ENCODE measurements at regions of chr5 and their contacts with region 1.

Region 1: DNA sequence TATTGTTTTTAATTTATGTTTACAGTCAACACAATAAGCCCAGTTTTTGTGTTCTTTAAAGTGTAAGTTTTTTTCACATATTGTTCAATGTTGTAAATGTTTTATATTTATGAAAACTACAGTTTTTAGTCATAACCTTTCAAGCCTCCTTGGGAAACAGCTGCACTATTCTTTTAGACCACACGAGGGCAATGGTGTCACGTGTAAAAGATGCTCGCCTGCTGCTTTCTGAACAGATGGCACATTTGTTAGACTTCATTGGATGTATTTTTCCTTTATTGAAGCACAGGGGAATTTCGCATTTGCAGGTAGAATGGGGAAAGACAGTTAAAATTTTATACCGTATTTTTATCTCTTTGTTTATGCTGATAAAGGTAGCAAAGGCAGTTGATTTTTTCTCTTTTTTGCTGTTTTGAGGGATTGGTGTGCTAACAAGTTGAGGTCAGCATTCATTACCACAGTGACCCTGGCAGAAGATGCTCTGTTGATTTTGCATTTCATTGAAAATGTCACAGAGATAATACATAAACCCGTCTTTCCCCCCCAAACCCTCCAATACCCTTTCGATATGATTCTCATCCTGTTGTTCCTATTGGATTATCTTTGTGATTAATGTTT is 59.0 kb downstream of the MAT2B start:
- DNase-seq: peak; percentile 79
- H3K4me3 Mint-ChIP-seq: no peak overlapping the region
- H3K27ac Mint-ChIP-seq: no peak overlapping the region
- H3K4me1 Mint-ChIP-seq: peaks cover 23% of the 10 kb centered on the region
- H3K27me3 Mint-ChIP-seq: peaks cover 51% of the 10 kb centered on the region

Region 2: GRCh38 chr5:163437309-163438182 is 126.9 kb before region 1 on chr5 and contains the start of gene CCNG1:
- CTCF ChIA-PET with region 1: no interaction called
- intact Hi-C with region 1: loop called (anchors 1 kb)
- DNase-seq: peak; percentile 95
- H3K4me3 Mint-ChIP-seq: peak within 1 kb of the TSS; percentile 91
- H3K27ac Mint-ChIP-seq: peak within 1 kb of the TSS; percentile 90
- H3K4me1 Mint-ChIP-seq: peaks cover 44% of the 10 kb centered on the region
- H3K27me3 Mint-ChIP-seq: no peaks in the 10 kb centered on the region
- total RNA-seq, gene CCNG1: 213 to 227 TPM

Region 3: GRCh38 chr5:163453705-163454104 is 110.7 kb before region 1 on chr5:
- CTCF ChIA-PET with region 1: no interaction called
- intact Hi-C with region 1: no loop called
- DNase-seq: no peak
- H3K4me3 Mint-ChIP-seq: no peak overlapping the region
- H3K27ac Mint-ChIP-seq: no peak overlapping the region
- H3K4me1 Mint-ChIP-seq: peaks cover 23% of the 10 kb centered on the region
- H3K27me3 Mint-ChIP-seq: no peaks in the 10 kb centered on the region

Region 4: GRCh38 chr5:163505368-163506094 is 58.9 kb before region 1 on chr5 and contains the start of gene MAT2B:
- CTCF ChIA-PET with region 1: no interaction called
- intact Hi-C with region 1: loop called (anchors 1 kb)
- DNase-seq: peak; percentile 95
- H3K4me3 Mint-ChIP-seq: peak within 1 kb of the TSS; percentile 85
- H3K27ac Mint-ChIP-seq: peak within 1 kb of the TSS; percentile 98
- H3K4me1 Mint-ChIP-seq: peaks cover 32% of the 10 kb centered on the region
- H3K27me3 Mint-ChIP-seq: no peaks in the 10 kb centered on the region
- total RNA-seq, gene MAT2B: 87.6 to 88.7 TPM

Region 5: DNA sequence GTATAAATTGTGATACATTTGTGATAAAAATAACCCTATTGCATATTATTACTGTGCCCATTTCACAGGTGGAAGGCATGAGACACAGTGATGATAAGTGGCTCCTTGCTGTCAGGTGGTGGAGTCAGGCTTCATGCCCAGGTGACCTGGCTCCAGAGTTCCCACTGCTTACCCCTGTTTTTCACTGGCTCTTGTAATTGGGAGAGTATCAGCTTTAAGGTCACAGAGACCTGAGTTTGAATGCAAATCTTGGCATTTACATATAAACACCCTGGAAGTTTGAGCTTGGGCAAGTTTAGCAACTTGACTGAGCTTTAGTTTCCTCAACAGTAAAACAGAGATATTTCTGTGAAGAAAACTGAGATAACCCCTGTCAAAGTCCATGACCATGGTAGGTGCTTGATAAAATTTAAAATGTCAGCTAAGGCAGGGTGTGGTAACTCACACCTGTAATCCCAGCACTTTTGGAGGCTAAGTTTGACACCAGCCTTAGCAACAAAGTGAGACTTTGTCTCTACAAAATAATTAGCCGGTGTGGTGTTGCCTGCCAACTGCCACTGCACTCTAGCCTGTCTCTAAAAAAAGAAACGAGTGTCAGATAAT is 29.8 kb before region 1 on chr5:
- CTCF ChIA-PET with region 1: no interaction called
- intact Hi-C with region 1: no loop called
- DNase-seq: no peak
- H3K4me3 Mint-ChIP-seq: no peak overlapping the region
- H3K27ac Mint-ChIP-seq: no peak overlapping the region
- H3K4me1 Mint-ChIP-seq: peaks cover 7% of the 10 kb centered on the region
- H3K27me3 Mint-ChIP-seq: no peaks in the 10 kb centered on the region

Region 6: DNA sequence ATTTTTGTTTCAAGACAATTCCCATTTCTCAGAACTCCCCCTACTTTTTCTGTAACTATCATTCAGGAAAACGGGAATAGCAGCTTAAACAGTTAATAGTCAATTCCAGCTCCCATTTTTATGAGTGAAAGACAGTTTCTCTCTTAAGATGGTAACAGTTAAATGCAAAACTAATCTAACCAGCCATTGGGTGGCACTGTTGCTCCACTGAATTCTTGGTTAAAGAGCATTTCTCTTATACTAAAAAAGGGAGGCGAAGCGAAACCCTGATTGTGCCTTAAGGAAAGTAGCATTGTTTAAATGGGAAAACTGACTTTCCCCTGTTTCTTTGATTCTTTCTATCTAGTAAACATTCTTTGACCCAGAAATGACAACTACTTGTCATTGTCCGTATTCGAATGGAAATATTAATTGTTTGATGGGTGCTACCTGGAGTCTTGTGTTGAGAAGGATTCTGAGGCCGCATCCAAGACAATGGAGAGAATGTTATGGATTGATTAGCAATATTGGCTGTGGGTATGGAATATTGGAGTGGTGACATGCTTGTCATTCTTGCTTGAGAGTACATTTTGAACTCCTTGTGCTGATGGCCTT is 448.7 kb after region 1 on chr5:
- CTCF ChIA-PET with region 1: no interaction called
- intact Hi-C with region 1: loop called (anchors 5 kb)
- DNase-seq: peak; percentile 62
- H3K4me3 Mint-ChIP-seq: no peak overlapping the region
- H3K27ac Mint-ChIP-seq: no peak overlapping the region
- H3K4me1 Mint-ChIP-seq: no peaks in the 10 kb centered on the region
- H3K27me3 Mint-ChIP-seq: no peaks in the 10 kb centered on the region

Region 7: DNA sequence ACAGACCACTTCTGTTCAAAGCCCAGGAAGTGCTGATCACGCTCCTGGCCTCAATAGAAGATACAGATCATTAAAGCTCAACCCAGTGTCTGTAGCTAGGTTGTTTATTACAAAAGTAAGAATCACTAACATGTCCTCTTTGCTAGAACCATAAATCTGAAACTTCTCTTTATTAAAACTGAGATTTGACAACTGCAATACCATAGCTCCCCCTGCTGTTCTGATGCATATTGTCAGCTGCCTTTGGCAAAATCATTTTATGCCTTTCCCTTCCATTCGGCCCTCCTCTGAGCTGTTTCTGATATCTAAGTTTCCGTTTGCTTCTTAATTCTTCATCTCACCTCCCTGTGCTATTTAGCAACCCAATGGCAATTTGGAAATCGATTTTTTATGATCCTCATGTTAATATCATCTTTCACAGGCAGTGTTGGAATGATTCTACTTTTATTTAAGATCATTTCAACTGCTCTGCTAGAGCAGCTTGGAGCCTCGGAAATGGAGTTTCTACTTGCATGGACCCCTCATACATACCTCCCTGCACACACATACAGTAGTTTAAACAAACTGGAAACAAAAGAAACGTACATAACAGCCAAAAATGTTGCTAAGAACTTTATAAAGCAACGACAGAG is 939.8 kb after region 1 on chr5:
- CTCF ChIA-PET with region 1: interaction called, 10 read pairs
- intact Hi-C with region 1: loop called (anchors 1 kb)
- DNase-seq: peak; percentile 27
- H3K4me3 Mint-ChIP-seq: no peak overlapping the region
- H3K27ac Mint-ChIP-seq: no peak overlapping the region
- H3K4me1 Mint-ChIP-seq: no peaks in the 10 kb centered on the region
- H3K27me3 Mint-ChIP-seq: no peaks in the 10 kb centered on the region

Region 8: DNA sequence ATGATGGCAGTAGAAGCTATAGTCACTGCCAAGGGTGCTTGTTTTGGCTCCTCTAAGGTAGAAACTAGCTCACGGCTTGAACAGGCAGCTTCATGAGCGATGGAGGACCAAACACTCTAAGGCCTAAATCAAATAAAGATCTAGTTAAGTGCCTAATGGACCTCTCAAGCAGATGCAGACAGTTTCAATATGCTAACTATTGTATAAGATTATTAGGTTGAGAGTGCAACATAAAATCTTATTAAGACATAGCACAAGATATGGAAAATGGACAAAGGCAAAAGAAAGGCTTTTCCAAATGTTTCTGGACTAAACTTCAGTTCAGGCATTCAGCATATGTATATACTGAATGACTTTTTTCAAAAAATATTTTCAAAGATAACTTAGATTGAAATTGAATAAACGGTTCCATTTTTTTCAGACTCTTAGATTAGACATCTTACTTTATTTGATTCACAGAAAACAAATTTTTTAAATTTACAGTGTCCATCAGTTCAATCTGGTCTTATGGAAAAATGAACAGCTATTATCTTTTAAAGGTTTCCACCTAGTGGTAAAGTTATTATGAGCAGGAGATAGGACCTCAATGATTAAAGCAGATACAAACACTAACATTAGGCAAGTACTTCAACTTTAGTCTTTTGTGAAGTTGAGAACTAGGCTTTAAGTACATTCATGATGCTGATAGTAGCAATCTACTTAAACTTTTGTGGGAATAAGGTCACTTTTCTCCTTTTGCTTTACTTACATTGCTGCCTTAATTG is 1108.7 kb after region 1 on chr5:
- CTCF ChIA-PET with region 1: no interaction called
- intact Hi-C with region 1: loop called (anchors 2 kb)
- DNase-seq: no peak
- H3K4me3 Mint-ChIP-seq: no peak overlapping the region
- H3K27ac Mint-ChIP-seq: no peak overlapping the region
- H3K4me1 Mint-ChIP-seq: no peaks in the 10 kb centered on the region
- H3K27me3 Mint-ChIP-seq: no peaks in the 10 kb centered on the region

Region 9: DNA sequence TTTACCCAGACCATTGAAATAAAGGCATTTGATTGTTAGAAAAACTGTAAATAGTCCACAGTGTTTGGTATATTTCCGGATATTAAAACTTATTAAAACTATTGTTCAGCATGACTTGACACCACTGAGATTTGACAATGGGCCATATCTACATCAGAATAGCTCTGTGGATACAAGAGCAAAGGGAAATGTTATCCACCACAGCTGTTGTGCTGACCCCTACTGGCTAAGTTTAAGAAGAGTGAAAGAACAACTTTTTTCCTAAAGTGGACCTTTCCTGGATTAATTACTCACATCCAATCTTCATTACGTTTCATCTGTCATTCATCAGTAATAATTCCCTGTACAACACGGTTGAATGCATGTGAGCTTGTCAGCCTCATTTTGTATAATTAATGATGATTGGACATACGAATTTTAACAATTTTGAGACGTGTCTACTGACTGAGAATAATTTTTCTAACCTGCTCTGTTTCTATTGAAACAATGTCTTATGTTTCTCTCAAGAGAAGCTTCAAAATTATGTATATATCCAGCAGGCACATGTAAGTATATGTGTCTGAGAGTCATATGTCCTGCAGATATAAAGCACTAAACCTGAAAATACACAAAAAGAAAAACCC is 1893.5 kb after region 1 on chr5:
- CTCF ChIA-PET with region 1: no interaction called
- intact Hi-C with region 1: loop called (anchors 10 kb)
- DNase-seq: no peak
- H3K4me3 Mint-ChIP-seq: no peak overlapping the region
- H3K27ac Mint-ChIP-seq: no peak overlapping the region
- H3K4me1 Mint-ChIP-seq: no peaks in the 10 kb centered on the region
- H3K27me3 Mint-ChIP-seq: no peaks in the 10 kb centered on the region